ENCODE measurements at regions of chrX and their contacts with region 1.

Region 1: GRCh38 chrX:53441531-53442321 is 7.6 kb upstream of the HSD17B10 start:
- DNase-seq: peak; percentile 91
- ATAC-seq: peak; percentile 84 to 92
- H3K4me3 ChIP-seq: peak overlapping the region; percentile 46
- H3K27ac ChIP-seq: peak overlapping the region; percentile 90 to 95
- H3K4me1 ChIP-seq: peaks cover 11% of the 10 kb centered on the region
- CTCF ChIP-seq: no peak
- EP300 ChIP-seq: no peak
- POLR2A ChIP-seq: peak; percentile 73
- RAD21 ChIP-seq: no peak

Region 2: GRCh38 chrX:53422086-53422860 is 19.5 kb before region 1 on chrX and contains the start of gene SMC1A:
- CTCF ChIA-PET with region 1: interaction called, 5 read pairs
- POLR2A ChIA-PET with region 1: interaction called, 11 read pairs
- DNase-seq: peak; percentile 97 to 98
- ATAC-seq: peak; percentile 91 to 95
- H3K4me3 ChIP-seq: peak within 1 kb of the TSS; percentile 65
- H3K27ac ChIP-seq: peak within 1 kb of the TSS; percentile 87 to 94
- H3K4me1 ChIP-seq: peaks cover 13% of the 10 kb centered on the region; the same call in 1 of the 3 replicates
- CTCF ChIP-seq: no peak
- EP300 ChIP-seq: no peak
- POLR2A ChIP-seq: peak; percentile 71
- RAD21 ChIP-seq: no peak
- polyA plus RNA-seq, gene SMC1A: 85.4 and 100 TPM in 2 replicates

Region 3: GRCh38 chrX:53458082-53458481 is 16.4 kb after region 1 on chrX:
- CTCF ChIA-PET with region 1: interaction called, 10 read pairs
- POLR2A ChIA-PET with region 1: no interaction called
- DNase-seq: peak in 1 of 2 experiments; percentile 29
- ATAC-seq: peak; percentile 55 to 59; a peak in 3 of 6 replicates
- H3K4me3 ChIP-seq: no peak overlapping the region
- H3K27ac ChIP-seq: no peak overlapping the region
- H3K4me1 ChIP-seq: peaks cover 25% of the 10 kb centered on the region
- CTCF ChIP-seq: peak; percentile 43
- EP300 ChIP-seq: no peak
- POLR2A ChIP-seq: no peak
- RAD21 ChIP-seq: peak; percentile 36 to 47; a peak in 4 of 5 replicates

Measured in A549 (cell line).